Tibial artery (tissue), 4 donors: ENCODE measurements at regions of chr1 and their contacts with region 1.

Region 1: GRCh38 chr1:201539561-201540354 is 831 bp downstream of the NAV1 start:
- DNase-seq: peak; percentile 80 to 88
- H3K4me3 ChIP-seq: peak overlapping the region; percentile 58 to 60
- H3K27ac ChIP-seq: peak overlapping the region; percentile 70 to 82
- H3K4me1 ChIP-seq: peaks cover 0 to 79% (median 51%) of the 10 kb centered on the region in 4 donors
- H3K27me3 ChIP-seq: no peaks in the 10 kb centered on the region
- CTCF ChIP-seq: no peak

Region 2: DNA sequence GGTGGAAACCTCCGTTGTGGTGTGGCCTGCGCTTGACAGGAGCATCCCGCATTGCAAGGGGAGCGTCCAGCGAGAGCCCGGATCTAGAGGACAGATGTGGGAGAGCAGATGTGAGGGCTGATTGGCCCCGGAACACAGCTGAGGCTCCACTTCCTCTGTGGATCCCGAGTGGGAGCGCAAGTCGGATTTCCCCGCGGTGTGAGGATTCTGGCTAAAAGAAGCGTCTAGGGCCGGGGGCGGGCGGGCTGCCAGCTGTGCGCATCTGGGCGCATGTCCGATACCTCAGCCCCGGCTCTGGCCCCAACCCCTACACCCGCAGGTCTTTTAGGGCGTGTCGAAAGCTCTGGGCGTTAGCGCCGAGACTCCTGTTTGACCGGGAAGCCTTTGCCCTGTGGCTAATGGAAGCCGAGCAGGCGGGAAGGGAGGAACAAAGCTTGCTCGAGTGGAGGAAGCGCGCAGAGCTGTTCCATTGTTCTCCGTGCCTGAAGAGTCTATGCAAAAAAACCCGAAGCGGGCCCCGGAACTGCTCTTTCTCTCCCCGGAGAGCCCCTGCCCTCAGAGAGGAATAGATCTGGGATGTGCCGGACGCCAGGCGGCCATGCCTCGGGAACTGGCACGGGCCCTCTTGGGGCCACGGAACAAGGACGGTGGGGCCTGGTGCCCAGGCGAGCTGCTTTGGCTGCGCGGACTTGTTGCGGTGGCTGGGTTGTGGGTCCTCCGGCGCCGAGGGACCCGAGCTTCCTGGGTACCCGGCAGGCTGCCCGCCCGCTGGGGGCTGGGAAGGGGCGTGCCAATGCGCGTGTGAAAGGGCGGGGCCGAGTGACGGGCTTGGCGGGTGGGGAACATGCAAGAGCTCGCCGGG is 110.2 kb after region 1 on chr1:
- intact Hi-C with region 1: no loop called
- DNase-seq: peak; percentile 85 to 88
- H3K4me3 ChIP-seq: peak overlapping the region; percentile 51 to 63
- H3K27ac ChIP-seq: peak overlapping the region; percentile 51 to 59
- H3K4me1 ChIP-seq: peaks cover 0 to 40% (median 33%) of the 10 kb centered on the region in 4 donors
- H3K27me3 ChIP-seq: no peaks in the 10 kb centered on the region
- CTCF ChIP-seq: no peak

Region 3: DNA sequence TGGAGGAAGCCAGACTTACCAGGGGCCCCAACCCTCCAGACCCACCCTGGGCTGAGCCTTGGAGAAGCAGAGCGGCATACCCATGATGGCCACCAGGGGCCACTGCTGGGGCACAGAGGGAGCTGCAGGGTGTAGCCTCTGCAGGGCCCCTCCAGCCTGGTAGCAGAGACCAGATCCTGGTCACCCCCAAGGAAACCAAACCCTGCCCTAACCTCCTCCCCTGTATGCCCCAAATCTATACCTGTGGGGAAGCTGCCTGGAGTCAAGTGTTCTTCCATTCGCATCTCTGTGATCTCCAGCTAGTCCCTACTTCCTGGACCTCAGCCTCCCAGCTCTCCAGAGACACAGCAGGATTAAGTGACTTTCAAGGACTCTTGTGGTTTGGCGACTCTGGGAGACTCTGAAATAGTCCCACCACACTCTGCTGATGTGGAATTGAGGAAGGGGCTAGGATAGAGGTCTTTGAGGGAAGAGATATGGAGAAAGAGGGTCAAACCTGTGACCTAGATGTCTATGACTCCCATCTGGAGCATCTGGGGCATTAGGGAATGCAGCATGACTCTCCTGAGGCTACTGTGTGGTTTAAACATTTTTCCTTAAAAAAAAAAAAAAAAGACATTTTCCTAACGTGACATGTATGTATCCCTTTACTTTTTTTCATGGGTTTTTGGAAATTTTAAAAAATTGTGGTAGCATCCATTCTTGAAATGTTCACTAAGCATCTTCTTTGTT is 170.0 kb after region 1 on chr1:
- intact Hi-C with region 1: loop called (anchors 5 kb)
- DNase-seq: peak; percentile 78 to 86
- H3K4me3 ChIP-seq: no peak overlapping the region
- H3K27ac ChIP-seq: peak overlapping the region; percentile 86 to 87
- H3K4me1 ChIP-seq: peaks cover 0 to 58% (median 50%) of the 10 kb centered on the region in 4 donors
- H3K27me3 ChIP-seq: no peaks in the 10 kb centered on the region
- CTCF ChIP-seq: peak; percentile 94 to 97